Esophagus muscularis mucosa (tissue), 4 donors: ENCODE measurements at regions of chr9 and their contacts with region 1.

Region 1: GRCh38 chr9:75890472-75891276 is at the start of gene PCSK5:
- DNase-seq: peak; percentile 97
- H3K4me3 ChIP-seq: peak within 1 kb of the TSS; percentile 64 to 96 (median 88)
- H3K27ac ChIP-seq: peak within 1 kb of the TSS; percentile 79 to 95 (median 95)
- H3K4me1 ChIP-seq: peaks cover 13 to 37% (median 32%) of the 10 kb centered on the region in 4 donors
- H3K27me3 ChIP-seq: no peaks in the 10 kb centered on the region
- CTCF ChIP-seq: peak in 1 of 3 experiments; percentile 39
- EP300 ChIP-seq: no peak
- POLR2A ChIP-seq: peak; percentile 74
- total RNA-seq, gene PCSK5: 22.0 to 37.4 (median 27.8) TPM

Region 2: GRCh38 chr9:75855509-75855908 is 35.2 kb before region 1 on chr9:
- intact Hi-C with region 1: no loop called
- DNase-seq: peak; percentile 12
- H3K4me3 ChIP-seq: no peak overlapping the region
- H3K27ac ChIP-seq: no peak overlapping the region
- H3K4me1 ChIP-seq: no peaks in the 10 kb centered on the region
- H3K27me3 ChIP-seq: no peaks in the 10 kb centered on the region
- CTCF ChIP-seq: peak; percentile 18 to 36 (median 25)
- EP300 ChIP-seq: no peak
- POLR2A ChIP-seq: no peak

Region 3: GRCh38 chr9:75953218-75953617 is 62.5 kb after region 1 on chr9:
- intact Hi-C with region 1: loop called (anchors 5 kb)
- DNase-seq: no peak
- H3K4me3 ChIP-seq: no peak overlapping the region
- H3K27ac ChIP-seq: no peak overlapping the region
- H3K4me1 ChIP-seq: peaks cover 0 to 33% (median 20%) of the 10 kb centered on the region in 4 donors
- H3K27me3 ChIP-seq: no peaks in the 10 kb centered on the region
- CTCF ChIP-seq: no peak
- EP300 ChIP-seq: no peak
- POLR2A ChIP-seq: no peak

Region 4: GRCh38 chr9:76018235-76018634 is 127.6 kb after region 1 on chr9:
- intact Hi-C with region 1: loop called (anchors 5 kb)
- DNase-seq: no peak
- H3K4me3 ChIP-seq: no peak overlapping the region
- H3K27ac ChIP-seq: no peak overlapping the region
- H3K4me1 ChIP-seq: peaks cover 0 to 8% (median 0%) of the 10 kb centered on the region in 4 donors
- H3K27me3 ChIP-seq: no peaks in the 10 kb centered on the region
- CTCF ChIP-seq: no peak
- EP300 ChIP-seq: no peak
- POLR2A ChIP-seq: no peak

Region 5: GRCh38 chr9:76044266-76044819 is 153.7 kb after region 1 on chr9:
- intact Hi-C with region 1: no loop called
- DNase-seq: no peak
- H3K4me3 ChIP-seq: no peak overlapping the region
- H3K27ac ChIP-seq: no peak overlapping the region
- H3K4me1 ChIP-seq: no peaks in the 10 kb centered on the region
- H3K27me3 ChIP-seq: no peaks in the 10 kb centered on the region
- CTCF ChIP-seq: no peak
- EP300 ChIP-seq: no peak
- POLR2A ChIP-seq: no peak

Region 6: GRCh38 chr9:76116913-76117312 is 226.2 kb after region 1 on chr9:
- intact Hi-C with region 1: loop called (anchors 5 kb)
- DNase-seq: no peak
- H3K4me3 ChIP-seq: no peak overlapping the region
- H3K27ac ChIP-seq: peak overlapping the region in 3 of 4 donors; percentile 10 to 24 (median 17)
- H3K4me1 ChIP-seq: peaks cover 0 to 38% (median 29%) of the 10 kb centered on the region in 4 donors
- H3K27me3 ChIP-seq: no peaks in the 10 kb centered on the region
- CTCF ChIP-seq: no peak
- EP300 ChIP-seq: no peak
- POLR2A ChIP-seq: no peak

Region 7: GRCh38 chr9:76161541-76161940 is 270.9 kb after region 1 on chr9:
- intact Hi-C with region 1: loop called (anchors 5 kb)
- DNase-seq: no peak
- H3K4me3 ChIP-seq: no peak overlapping the region
- H3K27ac ChIP-seq: peak overlapping the region; percentile 43 to 57 (median 55)
- H3K4me1 ChIP-seq: peaks cover 12 to 38% (median 35%) of the 10 kb centered on the region in 4 donors
- H3K27me3 ChIP-seq: no peaks in the 10 kb centered on the region
- CTCF ChIP-seq: no peak
- EP300 ChIP-seq: no peak
- POLR2A ChIP-seq: no peak

Region 8: DNA sequence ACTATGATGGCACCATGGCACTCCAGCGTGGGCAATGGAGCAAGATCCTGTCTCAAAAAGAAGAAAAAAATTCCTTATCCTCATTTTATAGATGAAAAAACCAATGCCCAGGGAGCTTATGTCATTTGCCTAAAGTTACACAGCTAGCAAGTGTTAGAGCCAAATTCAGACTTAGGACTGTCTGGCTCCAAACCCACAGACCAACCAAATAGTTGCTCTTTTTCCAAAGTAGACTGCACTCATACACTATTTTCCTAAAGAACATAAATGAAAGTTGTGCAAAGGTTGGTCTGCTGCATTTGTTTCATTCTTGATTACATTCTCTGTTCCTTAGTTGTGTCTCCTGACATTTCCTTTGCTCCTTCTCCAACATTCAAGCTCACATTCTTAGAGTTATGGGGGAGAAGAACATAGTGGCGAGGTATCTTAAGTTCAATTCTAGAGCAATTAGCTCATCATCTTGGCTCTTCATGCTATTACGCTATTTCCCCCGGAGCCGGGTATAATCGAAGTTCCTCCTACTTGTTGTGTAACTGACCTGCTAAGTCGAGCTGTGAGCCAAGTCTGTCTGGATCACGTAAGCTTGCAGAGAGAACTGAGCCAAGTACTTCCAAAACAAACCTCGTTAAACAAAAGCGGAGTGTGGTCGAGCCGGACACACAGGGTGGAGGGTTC is 365.2 kb after region 1 on chr9:
- intact Hi-C with region 1: loop called (anchors 5 kb)
- DNase-seq: peak; percentile 96
- H3K4me3 ChIP-seq: peak overlapping the region in 3 of 4 donors; percentile 11 to 17 (median 15)
- H3K27ac ChIP-seq: peak overlapping the region; percentile 74 to 86 (median 82)
- H3K4me1 ChIP-seq: peaks cover 6 to 30% (median 27%) of the 10 kb centered on the region in 4 donors
- H3K27me3 ChIP-seq: no peaks in the 10 kb centered on the region
- CTCF ChIP-seq: no peak
- EP300 ChIP-seq: no peak
- POLR2A ChIP-seq: no peak

Region 9: DNA sequence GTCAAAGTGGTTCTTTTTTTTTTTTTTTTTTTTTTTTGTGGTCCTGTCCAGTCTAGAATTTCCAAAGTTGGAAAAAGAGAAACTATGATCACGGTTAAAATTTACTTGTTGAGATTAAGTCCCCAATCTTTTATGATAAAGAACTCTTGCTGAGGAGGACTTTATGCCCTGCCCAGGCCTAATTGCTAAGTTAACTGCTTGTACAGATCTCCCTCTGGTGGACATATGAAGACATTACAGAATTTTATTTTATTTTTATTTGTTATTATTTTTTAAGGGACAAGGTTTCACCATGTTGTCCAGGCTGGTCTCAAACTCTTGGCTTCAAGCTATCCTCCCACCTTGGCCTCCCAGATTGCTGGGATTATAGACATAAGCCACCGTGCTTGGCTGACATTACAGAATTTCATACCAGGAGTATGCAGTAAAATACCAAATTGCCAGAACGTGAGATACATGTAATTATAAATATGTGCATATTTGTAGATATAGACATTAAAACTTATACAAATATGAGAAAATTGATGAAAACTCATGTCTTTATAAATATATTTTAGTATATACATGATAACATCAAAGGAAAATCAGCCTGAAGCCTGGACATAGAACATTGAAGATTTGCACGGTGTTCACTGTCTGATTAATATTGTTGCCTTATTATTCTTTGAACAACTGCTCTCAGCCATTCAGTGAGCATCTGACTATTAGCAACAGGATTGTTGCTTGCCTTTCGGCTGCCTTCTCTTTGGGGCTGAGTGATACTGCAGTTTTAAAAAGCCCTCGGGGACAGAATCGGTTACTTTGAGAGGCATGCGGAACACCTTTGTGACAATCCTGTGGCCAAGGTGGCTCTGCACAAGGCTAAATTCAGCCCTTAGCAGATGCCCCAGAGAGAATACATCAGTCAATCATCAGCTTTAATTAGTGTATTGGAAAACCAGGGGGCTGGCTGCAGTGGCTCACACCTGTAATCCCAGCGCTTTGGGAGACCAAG is 412.6 kb after region 1 on chr9:
- intact Hi-C with region 1: loop called (anchors 5 kb)
- DNase-seq: no peak
- H3K4me3 ChIP-seq: no peak overlapping the region
- H3K27ac ChIP-seq: no peak overlapping the region
- H3K4me1 ChIP-seq: peaks cover 0 to 9% (median 6%) of the 10 kb centered on the region in 4 donors
- H3K27me3 ChIP-seq: no peaks in the 10 kb centered on the region
- CTCF ChIP-seq: peak; percentile 63 to 78 (median 72)
- EP300 ChIP-seq: no peak
- POLR2A ChIP-seq: no peak